OCI-LY7 (cell line): ENCODE measurements at regions of chr2 and their contacts with region 1.

Region 1: GRCh38 chr2:98649135-98649991 is 41.0 kb downstream of the UNC50 start:
- DNase-seq: peak; percentile 84
- H3K4me3 ChIP-seq: no peak overlapping the region
- H3K27ac ChIP-seq: no peak overlapping the region
- H3K4me1 ChIP-seq: peaks cover 10% of the 10 kb centered on the region
- CTCF ChIP-seq: peak; percentile 99

Region 2: DNA sequence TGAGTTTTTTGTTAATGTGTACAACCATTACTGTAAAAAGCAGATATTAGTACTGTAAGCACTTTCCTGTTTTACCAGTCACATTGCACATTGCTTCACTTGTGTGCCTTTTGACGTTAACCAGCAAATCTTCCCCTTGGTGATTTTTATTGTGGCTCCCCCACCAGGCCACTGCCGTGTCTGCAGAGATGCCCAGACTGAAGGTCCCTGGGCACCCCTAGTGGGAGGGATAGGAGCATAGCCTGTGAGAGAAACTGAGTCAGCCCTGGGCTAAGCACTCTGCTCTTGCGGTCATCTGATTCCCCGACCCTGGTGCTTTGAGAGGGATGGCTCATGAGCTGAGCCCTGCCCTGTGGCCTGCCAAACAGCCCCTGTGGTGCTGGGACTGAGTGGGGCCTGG is 131.3 kb before region 1 on chr2:
- CTCF ChIA-PET with region 1: no interaction called
- POLR2A ChIA-PET with region 1: no interaction called
- intact Hi-C with region 1: no loop called
- DNase-seq: peak; percentile 32
- H3K4me3 ChIP-seq: no peak overlapping the region
- H3K27ac ChIP-seq: no peak overlapping the region
- H3K4me1 ChIP-seq: no peaks in the 10 kb centered on the region
- CTCF ChIP-seq: peak; percentile 79

Region 3: DNA sequence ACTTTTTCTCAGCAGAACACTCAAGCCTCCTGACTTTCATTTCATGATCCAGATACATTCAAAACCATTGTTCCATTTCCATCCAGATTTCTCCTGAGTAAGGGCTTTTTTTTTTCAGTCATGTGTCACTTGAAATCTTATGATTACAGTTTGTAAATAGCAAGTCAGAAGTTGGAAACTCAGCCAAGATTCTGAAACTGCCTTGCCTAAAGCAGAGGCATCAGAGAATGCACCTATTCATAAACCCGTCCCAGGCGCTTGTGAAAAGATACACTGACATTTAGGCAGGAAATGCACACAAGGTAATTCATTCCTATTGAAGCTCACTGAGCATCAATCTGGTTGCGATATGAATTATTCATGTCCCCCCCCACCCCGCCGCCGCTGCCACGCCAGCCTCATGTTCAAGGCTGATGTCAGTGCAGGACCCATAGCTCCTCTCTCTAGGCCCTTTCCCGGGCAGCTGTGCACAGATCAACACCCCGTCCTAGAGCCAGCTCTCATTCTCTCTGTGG is 112.0 kb after region 1 on chr2:
- CTCF ChIA-PET with region 1: no interaction called
- POLR2A ChIA-PET with region 1: no interaction called
- intact Hi-C with region 1: loop called (anchors 5 kb)
- DNase-seq: peak; percentile 72
- H3K4me3 ChIP-seq: peak overlapping the region; percentile 33
- H3K27ac ChIP-seq: peak overlapping the region; percentile 90
- H3K4me1 ChIP-seq: peaks cover 100% of the 10 kb centered on the region
- CTCF ChIP-seq: no peak

Region 4: GRCh38 chr2:99066075-99066958 is 417.0 kb after region 1 on chr2:
- CTCF ChIA-PET with region 1: no interaction called
- POLR2A ChIA-PET with region 1: no interaction called
- intact Hi-C with region 1: loop called (anchors 1 kb)
- DNase-seq: peak; percentile 59
- H3K4me3 ChIP-seq: no peak overlapping the region
- H3K27ac ChIP-seq: no peak overlapping the region
- H3K4me1 ChIP-seq: peaks cover 9% of the 10 kb centered on the region
- CTCF ChIP-seq: peak; percentile 84